Lower leg skin (tissue), 4 donors: ENCODE measurements at regions of chr1 and their contacts with region 1.

Region 1: GRCh38 chr1:177948336-177948972 is 21.4 kb downstream of the SEC16B start:
- DNase-seq: peak; percentile 41 to 89
- H3K4me3 ChIP-seq: no peak overlapping the region
- CTCF ChIP-seq: peak in 1 of 3 donors; percentile 25
- POLR2A ChIP-seq: no peak

Region 2: DNA sequence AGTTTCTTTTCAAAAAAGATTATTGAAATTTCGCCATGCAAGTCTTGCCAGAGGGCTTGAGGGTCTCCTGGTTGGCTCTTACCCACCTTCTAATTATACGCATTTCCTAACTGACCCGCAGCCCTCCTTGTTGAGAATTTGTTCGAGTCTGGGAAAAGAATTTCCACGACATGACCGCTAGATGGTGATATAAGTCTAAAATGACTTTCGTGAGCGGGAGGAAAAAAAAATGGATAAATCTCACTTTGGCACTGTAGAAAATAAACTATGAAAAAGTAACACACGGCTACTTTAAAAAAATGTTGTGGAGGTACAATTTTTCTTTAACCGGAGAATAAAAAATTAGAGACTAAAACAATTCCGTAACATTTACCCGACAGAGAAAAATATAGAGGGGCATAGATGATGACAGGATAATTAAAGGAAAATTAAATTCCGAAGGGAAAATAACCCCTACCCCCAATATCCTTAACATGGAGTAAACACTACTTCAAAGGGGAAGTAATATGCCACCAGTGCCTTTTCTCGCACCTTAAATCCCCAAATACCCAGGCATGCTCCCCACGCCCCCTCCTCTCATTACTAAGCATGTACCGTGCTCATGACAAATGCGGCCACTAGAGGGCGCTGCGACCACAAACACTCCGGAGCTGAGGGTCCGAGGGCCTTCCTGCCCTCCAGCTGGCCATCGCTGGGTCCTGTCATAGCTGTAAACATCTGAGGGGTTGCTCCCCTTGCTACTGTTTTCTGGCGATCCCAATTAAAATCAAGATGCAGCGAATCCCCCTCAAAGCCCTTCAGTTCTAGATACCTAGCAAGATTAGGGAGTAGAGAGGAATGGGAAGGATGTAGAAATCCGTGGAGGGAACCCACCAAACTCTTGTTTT is 1050.9 kb before region 1 on chr1:
- intact Hi-C with region 1: loop called (anchors 10 kb)
- DNase-seq: peak; percentile 25 to 90
- H3K4me3 ChIP-seq: no peak overlapping the region
- CTCF ChIP-seq: no peak
- POLR2A ChIP-seq: no peak

Region 3: DNA sequence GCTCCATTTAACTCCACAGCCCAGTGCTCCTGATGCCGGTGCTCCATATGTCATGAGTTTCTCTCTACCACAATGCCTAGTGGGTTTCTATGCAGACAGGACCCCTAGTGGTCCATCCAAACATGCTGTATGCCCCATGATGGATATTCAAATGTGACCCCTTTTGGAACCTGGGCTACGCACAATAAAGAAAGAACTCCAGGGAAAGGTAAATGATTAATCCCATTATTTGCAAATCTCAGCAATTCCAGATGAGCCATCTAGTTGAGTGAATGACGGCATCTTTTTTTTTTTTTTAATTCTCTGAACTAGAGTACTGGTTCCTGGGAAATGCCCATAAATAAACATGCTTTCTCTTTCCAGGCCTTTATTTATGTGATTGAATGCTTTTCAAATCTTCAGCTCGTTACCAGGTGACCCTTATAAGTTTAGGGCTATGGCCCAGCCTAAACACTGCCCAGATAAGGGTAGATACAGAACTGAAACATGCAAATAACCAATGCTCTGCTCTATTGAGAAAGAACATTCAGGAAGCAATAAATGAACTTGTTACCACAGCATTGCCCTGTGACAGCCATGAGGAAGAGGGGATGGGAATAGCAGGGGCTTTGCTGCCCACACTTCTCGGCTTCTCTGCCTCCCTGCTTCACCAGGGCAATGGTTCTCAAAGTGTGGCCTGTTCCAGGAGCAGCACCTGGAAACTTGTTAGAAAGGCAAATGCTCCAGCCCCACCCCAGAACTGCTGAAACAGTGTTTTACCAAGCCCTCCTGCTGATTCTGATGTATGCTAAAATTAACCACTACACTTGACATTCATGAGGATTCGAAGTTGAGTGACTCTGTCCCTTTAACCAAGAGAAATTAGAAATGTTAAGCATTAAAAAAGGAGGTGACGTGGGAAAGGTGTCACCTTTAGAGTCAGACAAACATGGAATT is 130.2 kb before region 1 on chr1:
- intact Hi-C with region 1: no loop called
- DNase-seq: no peak
- H3K4me3 ChIP-seq: no peak overlapping the region
- CTCF ChIP-seq: no peak
- POLR2A ChIP-seq: no peak

Region 4: DNA sequence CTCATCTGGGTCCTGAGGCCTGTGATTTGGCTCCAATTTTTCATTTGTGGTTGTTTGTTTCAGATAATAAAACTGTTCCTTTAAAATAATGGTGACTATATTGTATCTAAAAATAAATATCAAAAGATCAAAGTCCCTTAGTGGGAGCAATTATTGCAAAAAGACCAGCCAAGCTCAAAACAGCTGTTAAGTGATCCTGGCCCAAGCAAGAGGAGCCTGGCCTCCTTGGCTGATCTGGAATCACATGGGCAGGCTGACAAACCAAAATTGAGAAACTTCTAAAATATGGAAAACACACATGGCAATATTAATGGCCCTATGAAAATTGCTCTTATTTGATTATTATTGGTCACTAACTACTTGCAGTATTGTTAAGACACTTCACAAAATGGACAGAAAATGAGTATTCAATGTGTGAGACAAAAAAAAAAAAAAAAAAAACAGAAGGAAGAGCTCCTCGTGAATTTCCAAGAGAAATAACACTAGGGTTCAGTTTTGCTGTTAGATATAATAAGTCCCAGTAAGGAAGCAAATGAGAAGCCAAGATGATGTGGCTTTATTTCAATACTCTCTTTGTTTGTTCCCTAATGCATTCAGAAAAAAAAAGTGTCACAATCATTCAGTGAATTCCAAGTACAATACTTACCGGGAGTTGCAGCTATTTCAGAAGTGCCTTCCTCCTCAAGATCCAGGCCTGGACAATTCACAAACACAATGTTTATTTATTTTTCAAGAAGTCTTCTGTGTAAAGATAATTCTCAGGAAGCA is 83.7 kb before region 1 on chr1:
- intact Hi-C with region 1: no loop called
- DNase-seq: no peak
- H3K4me3 ChIP-seq: no peak overlapping the region
- CTCF ChIP-seq: no peak
- POLR2A ChIP-seq: no peak